GM12878 (cell line): ENCODE measurements at regions of chr11 and their contacts with region 1.

Region 1: DNA sequence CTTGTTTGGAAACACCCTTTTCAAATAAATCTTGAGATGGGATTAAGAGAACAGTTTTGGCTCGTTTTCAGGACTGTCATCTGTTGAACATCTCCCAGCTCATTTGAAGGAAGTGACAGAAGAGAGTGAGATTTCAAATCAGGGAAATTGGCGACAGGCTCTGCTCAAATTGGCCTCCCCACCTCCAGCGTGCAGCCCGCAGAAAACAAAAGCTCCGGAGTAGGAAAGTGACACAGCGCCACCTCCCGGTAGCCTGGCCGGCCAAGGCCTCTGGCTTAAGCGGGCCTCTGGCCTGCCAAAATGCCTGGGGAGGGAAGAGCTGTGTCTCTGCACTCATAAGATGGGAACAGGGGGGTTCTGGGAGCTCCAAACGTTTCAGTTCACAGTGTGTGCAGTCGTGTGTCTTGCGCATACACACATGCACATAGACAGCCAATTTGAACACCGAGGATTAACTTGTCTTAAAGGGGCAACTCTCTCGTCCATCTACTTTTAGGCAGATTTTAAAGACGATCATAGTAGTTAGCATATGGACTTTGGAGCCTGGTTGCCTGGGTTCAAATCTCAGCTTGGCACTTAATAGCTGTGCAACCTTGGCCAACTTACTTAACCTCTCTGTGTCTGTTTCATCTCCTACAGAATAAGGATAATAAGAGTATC is 132.7 kb upstream of the RCN1 start:
- DNase-seq: peak; percentile 9
- ATAC-seq: peak; percentile 98
- H3K4me3 ChIP-seq: no peak overlapping the region
- H3K27ac ChIP-seq: no peak overlapping the region
- H3K4me1 ChIP-seq: no peaks in the 10 kb centered on the region
- H3K27me3 ChIP-seq: no peaks in the 10 kb centered on the region
- CTCF ChIP-seq: peak; percentile 88 to 91 (median 91)
- EP300 ChIP-seq: no peak
- POLR2A ChIP-seq: no peak
- RAD21 ChIP-seq: peak; percentile 91

Region 2: DNA sequence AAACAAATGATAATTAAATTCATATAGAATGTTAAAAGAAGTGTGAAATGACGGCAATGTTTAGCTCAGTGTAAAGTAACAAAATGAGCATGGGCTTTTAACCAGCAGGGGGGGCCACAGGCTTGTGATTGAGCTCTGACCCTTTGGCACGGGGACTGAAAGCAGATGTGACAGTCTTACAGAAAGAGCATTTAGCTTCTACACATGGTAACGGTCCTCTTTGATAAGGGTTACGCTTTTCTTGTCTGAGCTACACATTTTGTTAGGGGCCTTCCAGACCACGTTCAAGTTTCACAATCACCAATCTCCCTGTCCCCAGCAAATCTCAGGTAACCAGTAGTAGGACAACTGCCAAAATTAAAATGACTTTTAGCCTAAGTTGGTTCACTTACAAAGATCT is 851.1 kb before region 1 on chr11:
- CTCF ChIA-PET with region 1: interaction called, 32 read pairs
- POLR2A ChIA-PET with region 1: no interaction called
- RAD21 ChIA-PET with region 1: interaction called, 9 read pairs
- SMC1A ChIA-PET with region 1: interaction called, 8 read pairs
- in situ Hi-C with region 1: loop called (anchors 10 kb)
- intact Hi-C with region 1: loop called (anchors 2 kb)
- DNase-seq: no peak
- ATAC-seq: peak; percentile 98
- H3K4me3 ChIP-seq: no peak overlapping the region
- H3K27ac ChIP-seq: no peak overlapping the region
- H3K4me1 ChIP-seq: no peaks in the 10 kb centered on the region
- H3K27me3 ChIP-seq: no peaks in the 10 kb centered on the region
- CTCF ChIP-seq: peak; percentile 64 to 78 (median 77)
- EP300 ChIP-seq: no peak
- POLR2A ChIP-seq: no peak
- RAD21 ChIP-seq: peak; percentile 86

Region 3: DNA sequence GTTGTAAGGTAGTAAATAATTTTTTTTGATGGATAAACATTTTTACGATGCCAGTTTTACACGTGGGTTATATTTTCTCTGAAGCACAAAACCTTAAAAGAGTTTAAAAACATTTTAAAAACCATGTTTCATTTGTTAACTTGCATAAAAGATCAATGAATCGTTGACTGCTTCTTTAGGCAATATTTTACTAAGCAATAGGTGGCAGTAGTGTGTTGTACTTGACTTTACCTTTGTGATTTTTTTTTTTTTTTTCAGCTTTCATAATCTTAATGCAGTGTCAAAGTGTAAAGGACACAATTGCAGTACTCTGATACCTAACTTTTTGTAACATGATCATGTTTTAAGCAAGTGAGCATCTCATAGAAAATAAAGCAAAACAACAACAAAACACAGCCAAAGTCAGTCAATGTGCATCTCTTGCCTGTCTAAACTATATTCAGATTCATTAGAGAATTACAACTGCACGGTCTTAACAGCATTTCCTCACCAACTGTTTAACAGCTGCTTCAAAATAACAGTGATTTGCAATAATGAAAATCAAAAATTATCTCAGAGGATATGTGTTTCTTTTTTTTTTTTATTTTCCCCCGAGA is 560.9 kb before region 1 on chr11:
- CTCF ChIA-PET with region 1: interaction called, 49 read pairs
- POLR2A ChIA-PET with region 1: interaction called, 4 read pairs
- RAD21 ChIA-PET with region 1: interaction called, 18 read pairs
- SMC1A ChIA-PET with region 1: interaction called, 13 read pairs
- in situ Hi-C with region 1: loop called (anchors 5 kb)
- intact Hi-C with region 1: loop called (anchors 1 kb)
- DNase-seq: no peak
- ATAC-seq: peak; percentile 70
- H3K4me3 ChIP-seq: no peak overlapping the region
- H3K27ac ChIP-seq: no peak overlapping the region
- H3K4me1 ChIP-seq: no peaks in the 10 kb centered on the region
- H3K27me3 ChIP-seq: no peaks in the 10 kb centered on the region
- CTCF ChIP-seq: peak; percentile 43 to 72 (median 55); a peak in 5 of 6 replicates
- EP300 ChIP-seq: no peak
- POLR2A ChIP-seq: no peak
- RAD21 ChIP-seq: peak; percentile 78

Region 4: DNA sequence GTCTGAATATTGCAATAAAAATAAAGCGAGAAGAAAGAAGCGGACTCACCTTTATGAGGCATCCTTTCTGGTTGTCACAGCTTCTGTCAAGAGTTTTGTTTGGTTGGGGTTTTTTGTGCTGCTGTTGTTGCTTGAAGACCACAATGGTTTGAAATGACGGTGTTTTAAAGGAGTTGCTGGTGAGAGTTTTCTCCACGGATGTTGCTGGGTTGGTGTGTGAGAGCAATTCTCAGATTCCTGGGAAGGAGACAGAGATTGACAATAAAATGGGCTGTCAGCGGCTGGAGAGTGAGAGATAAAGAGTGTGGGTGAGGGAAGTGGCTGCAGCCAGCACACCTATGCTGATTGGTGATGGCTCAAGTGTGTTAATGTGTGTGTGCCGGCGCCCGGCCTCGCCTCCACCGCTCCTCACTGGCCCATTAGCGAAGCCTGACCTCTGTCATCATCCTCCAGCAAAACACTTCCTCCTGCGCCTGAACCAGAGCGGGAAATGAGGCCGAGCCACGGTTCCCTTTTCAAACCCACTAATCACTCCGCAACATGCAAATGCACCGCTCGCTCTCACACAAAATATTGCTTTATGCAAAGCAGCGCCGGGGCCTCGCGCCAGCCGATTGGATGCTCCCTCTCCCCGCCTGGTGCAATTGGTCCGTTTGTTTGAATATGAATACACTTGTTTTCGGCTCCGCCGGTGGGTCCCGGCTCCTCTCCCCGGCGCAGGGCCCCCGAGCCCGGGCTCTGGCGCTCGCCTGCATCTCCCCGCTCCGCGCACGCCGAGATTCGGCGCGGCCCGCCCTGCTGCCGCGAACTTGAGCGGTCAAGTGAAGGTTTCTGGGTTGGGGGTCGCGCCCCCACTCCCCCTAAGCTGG is 147.2 kb before region 1 on chr11 and contains the start of gene PAX6:
- CTCF ChIA-PET with region 1: no interaction called
- POLR2A ChIA-PET with region 1: no interaction called
- RAD21 ChIA-PET with region 1: no interaction called
- SMC1A ChIA-PET with region 1: interaction called, 3 read pairs
- in situ Hi-C with region 1: no loop called
- intact Hi-C with region 1: loop called (anchors 5 kb)
- DNase-seq: peak; percentile 5
- ATAC-seq: peak; percentile 59
- H3K4me3 ChIP-seq: peak within 1 kb of the TSS; percentile 63
- H3K27ac ChIP-seq: no peak within 1 kb of the TSS
- H3K4me1 ChIP-seq: peaks cover 12% of the 10 kb centered on the region; the same call in 1 of the 2 replicates
- H3K27me3 ChIP-seq: peaks cover 30 to 63% of the 10 kb centered on the region in 2 experiments
- CTCF ChIP-seq: no peak
- EP300 ChIP-seq: no peak
- POLR2A ChIP-seq: 0 out of 2 replicates have a peak, but pooled peaks have one; percentile 29
- RAD21 ChIP-seq: no peak
- polyA plus RNA-seq, gene PAX6: 0.10 TPM in 1 of 2 experiments, not detected in the other

Region 5: DNA sequence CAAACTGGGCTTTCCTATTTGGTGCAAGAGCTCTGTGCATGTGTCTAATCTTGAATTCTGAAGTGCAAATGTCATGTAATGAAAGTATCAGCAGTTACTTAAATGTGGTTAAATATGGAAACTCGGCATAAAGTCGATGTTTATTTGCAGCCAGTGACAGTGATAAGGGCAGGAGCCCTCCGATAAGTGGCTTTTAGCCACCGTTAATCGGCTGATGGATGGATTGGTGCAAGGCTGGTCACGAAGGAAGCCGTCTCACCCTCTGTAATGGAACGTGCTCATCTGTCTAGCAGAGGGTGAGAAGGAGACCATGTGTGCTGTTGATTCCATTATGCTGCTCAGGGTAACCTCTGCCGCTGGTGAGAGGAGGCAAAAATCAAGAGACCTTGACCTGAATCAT is 25.3 kb before region 1 on chr11:
- CTCF ChIA-PET with region 1: interaction called, 31 read pairs
- POLR2A ChIA-PET with region 1: no interaction called
- RAD21 ChIA-PET with region 1: no interaction called
- SMC1A ChIA-PET with region 1: interaction called, 7 read pairs
- in situ Hi-C with region 1: no loop called
- intact Hi-C with region 1: no loop called
- DNase-seq: no peak
- ATAC-seq: no peak
- H3K4me3 ChIP-seq: no peak overlapping the region
- H3K27ac ChIP-seq: no peak overlapping the region
- H3K4me1 ChIP-seq: no peaks in the 10 kb centered on the region; the same call in 1 of the 2 replicates
- H3K27me3 ChIP-seq: no peaks in the 10 kb centered on the region
- CTCF ChIP-seq: no peak
- EP300 ChIP-seq: no peak
- POLR2A ChIP-seq: no peak
- RAD21 ChIP-seq: no peak

Region 6: DNA sequence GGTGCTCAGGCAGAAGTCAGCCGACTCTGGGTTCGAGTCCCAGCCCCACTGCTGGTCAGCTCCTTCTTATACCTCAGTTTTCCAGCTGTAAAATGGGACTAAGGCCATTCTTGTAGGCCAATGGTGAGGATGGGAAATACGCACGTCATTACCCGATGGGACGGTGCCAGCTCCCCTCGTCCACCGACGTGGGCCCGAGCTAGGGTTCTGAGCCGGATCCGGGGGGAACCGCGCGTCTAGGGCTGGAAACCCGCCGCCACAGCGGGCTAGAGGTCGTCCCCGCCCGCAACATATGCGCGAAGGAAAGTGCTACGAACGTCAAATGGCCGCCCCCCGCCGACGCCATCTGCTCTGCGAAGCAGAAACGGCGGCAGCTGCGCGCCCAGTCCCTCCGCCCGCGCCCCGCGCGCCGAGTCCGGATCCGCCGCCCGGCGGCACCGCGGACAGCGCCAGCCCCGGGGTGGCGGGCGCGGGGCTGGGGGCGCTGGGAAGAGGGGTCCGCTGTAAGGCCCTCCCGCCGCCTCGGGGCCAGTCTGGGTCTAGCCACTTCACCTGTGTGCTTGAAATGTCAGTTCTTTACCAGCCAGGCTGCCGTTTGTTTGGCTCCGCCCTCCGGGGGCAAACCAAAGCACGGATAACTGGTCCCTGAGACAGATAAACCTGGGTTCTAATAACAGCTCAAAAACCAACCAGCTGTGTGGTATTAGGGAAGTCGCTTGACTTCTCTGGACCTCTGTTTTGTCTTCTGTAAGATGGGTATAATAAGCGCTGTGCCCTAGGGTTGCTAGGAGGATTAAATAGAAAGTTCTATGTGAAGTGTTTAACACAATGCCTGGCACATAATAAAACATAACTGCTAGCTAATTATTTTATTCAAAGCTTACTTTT is 29.2 kb after region 1 on chr11:
- CTCF ChIA-PET with region 1: interaction called, 14 read pairs
- POLR2A ChIA-PET with region 1: no interaction called
- RAD21 ChIA-PET with region 1: interaction called, 3 read pairs
- SMC1A ChIA-PET with region 1: interaction called, 3 read pairs
- in situ Hi-C with region 1: no loop called
- intact Hi-C with region 1: no loop called
- DNase-seq: no peak
- ATAC-seq: no peak
- H3K4me3 ChIP-seq: no peak overlapping the region
- H3K27ac ChIP-seq: no peak overlapping the region
- H3K4me1 ChIP-seq: no peaks in the 10 kb centered on the region
- H3K27me3 ChIP-seq: no peaks in the 10 kb centered on the region; a peak in 2 of 4 replicates
- CTCF ChIP-seq: no peak
- EP300 ChIP-seq: no peak
- POLR2A ChIP-seq: no peak
- RAD21 ChIP-seq: no peak